WTC11 (cell line): ENCODE measurements at regions of chr16 and their contacts with region 1.

Region 1: GRCh38 chr16:81855552-81856153 is 76.6 kb downstream of the PLCG2 start:
- DNase-seq: peak; percentile 53
- ATAC-seq: peak; percentile 93
- H3K4me3 Mint-ChIP-seq: no peak overlapping the region
- H3K27ac Mint-ChIP-seq: no peak overlapping the region
- H3K4me1 Mint-ChIP-seq: no peaks in the 10 kb centered on the region
- H3K27me3 Mint-ChIP-seq: no peaks in the 10 kb centered on the region; the same call in none of the 2 replicates
- CTCF ChIP-seq: no peak

Region 2: GRCh38 chr16:81841722-81842121 is 13.9 kb before region 1 on chr16:
- CTCF ChIA-PET with region 1: interaction called, 12 read pairs
- POLR2A ChIA-PET with region 1: no interaction called
- DNase-seq: no peak
- ATAC-seq: no peak
- H3K4me3 Mint-ChIP-seq: no peak overlapping the region
- H3K27ac Mint-ChIP-seq: no peak overlapping the region
- H3K4me1 Mint-ChIP-seq: peaks cover 9% of the 10 kb centered on the region
- H3K27me3 Mint-ChIP-seq: no peaks in the 10 kb centered on the region
- CTCF ChIP-seq: no peak

Region 3: GRCh38 chr16:81901483-81901882 is 45.8 kb after region 1 on chr16:
- CTCF ChIA-PET with region 1: no interaction called
- POLR2A ChIA-PET with region 1: no interaction called
- DNase-seq: no peak
- ATAC-seq: no peak
- H3K4me3 Mint-ChIP-seq: no peak overlapping the region
- H3K27ac Mint-ChIP-seq: no peak overlapping the region
- H3K4me1 Mint-ChIP-seq: no peaks in the 10 kb centered on the region
- H3K27me3 Mint-ChIP-seq: no peaks in the 10 kb centered on the region
- CTCF ChIP-seq: no peak